PC-9 (cell line): ENCODE measurements at regions of chr12 and their contacts with region 1.

Region 1: GRCh38 chr12:50217202-50217601 is 50.0 kb upstream of the CERS5 start:
- DNase-seq: no peak
- H3K4me3 ChIP-seq: no peak overlapping the region
- H3K27ac ChIP-seq: peak overlapping the region; percentile 83
- H3K4me1 ChIP-seq: peaks cover 77% of the 10 kb centered on the region
- H3K27me3 ChIP-seq: no peaks in the 10 kb centered on the region
- CTCF ChIP-seq: no peak

Region 2: GRCh38 chr12:50302686-50303085 is 85.5 kb after region 1 on chr12:
- CTCF ChIA-PET with region 1: interaction called, 3 read pairs
- POLR2A ChIA-PET with region 1: interaction called, 37 read pairs
- intact Hi-C with region 1: no loop called
- DNase-seq: no peak
- H3K4me3 ChIP-seq: no peak overlapping the region
- H3K27ac ChIP-seq: no peak overlapping the region
- H3K4me1 ChIP-seq: peaks cover 24% of the 10 kb centered on the region
- H3K27me3 ChIP-seq: no peaks in the 10 kb centered on the region
- CTCF ChIP-seq: no peak

Region 3: DNA sequence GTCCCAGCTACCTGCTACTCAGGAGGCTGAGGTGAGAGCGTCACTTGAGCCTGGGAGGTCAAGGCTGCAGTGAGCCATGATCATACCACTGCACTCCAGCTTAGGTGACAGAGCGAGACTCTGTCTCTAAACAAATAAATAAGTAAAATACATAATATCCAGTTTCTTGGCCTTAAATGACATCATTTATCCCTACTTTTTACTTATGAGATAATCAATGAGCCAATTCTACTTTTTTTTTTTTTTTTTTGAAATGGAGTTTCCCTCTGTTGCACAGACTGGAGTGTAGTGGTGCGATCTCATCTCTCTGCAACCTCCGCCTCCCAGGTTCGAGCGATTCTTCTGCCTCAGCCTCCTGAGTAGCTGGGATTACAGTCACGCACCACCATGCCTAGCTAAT is 91.4 kb after region 1 on chr12:
- CTCF ChIA-PET with region 1: interaction called, 3 read pairs
- POLR2A ChIA-PET with region 1: interaction called, 20 read pairs
- intact Hi-C with region 1: loop called (anchors 5 kb)
- DNase-seq: no peak
- H3K4me3 ChIP-seq: no peak overlapping the region
- H3K27ac ChIP-seq: no peak overlapping the region
- H3K4me1 ChIP-seq: peaks cover 26% of the 10 kb centered on the region
- H3K27me3 ChIP-seq: no peaks in the 10 kb centered on the region
- CTCF ChIP-seq: no peak